ENCODE measurements at regions of chr5 and their contacts with region 1.

Region 1: DNA sequence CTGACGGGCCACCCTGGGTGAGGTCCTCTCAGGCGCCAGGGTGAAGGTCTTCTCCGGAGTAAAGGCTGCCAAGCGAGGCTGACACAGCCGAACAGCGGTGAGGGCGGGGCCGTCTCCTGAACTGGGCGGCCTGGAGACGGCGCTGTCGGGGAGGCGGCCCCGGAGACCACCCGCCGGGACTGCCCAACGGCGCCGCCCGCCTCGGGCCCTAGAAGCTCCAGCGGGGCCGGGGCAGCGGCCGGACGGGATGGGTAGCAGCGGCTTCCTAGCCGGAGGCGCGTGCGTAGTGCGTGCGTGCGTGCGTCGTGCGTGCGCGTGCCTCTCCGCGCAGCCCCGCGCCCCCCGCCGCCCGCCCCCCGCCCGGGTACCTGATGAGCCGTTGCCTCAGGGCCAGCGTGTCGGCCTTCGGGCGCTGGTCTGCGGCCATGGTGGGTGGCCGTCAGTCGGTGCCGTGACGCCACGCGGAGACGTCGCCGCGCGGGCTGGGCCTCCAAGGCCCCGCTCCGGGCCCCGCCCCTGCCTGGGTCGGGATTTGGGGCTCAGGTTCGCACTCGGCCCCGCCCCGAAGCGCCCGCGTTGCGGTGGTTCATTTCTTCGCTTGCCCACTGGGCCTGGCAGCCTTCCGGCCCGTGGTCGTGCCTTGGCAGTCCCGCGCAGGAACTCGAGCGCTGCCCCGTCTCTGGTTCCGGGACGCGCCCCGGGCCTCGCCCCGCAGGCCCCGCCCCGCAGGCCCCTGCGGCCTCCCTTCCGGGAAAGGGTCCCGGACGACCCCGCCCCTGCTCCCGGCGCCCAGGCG is at the start of gene PHYKPL:
- DNase-seq: peak; percentile 72 to 81
- H3K4me3 ChIP-seq: peak within 1 kb of the TSS; percentile 78
- H3K4me3 Mint-ChIP-seq: peak within 1 kb of the TSS; percentile 79
- H3K27ac Mint-ChIP-seq: peak within 1 kb of the TSS; percentile 77
- H3K4me1 ChIP-seq: peaks cover 20% of the 10 kb centered on the region
- H3K4me1 Mint-ChIP-seq: peaks cover 21% of the 10 kb centered on the region
- H3K27me3 ChIP-seq: no peaks in the 10 kb centered on the region
- H3K27me3 Mint-ChIP-seq: no peaks in the 10 kb centered on the region
- CTCF ChIP-seq: peak in 1 of 2 experiments; percentile 15
- total RNA-seq, gene PHYKPL: 78.2 and 82.1 TPM in 2 replicates

Region 2: GRCh38 chr5:178261666-178262606 is 29.6 kb after region 1 on chr5:
- CTCF ChIA-PET with region 1: no interaction called
- POLR2A ChIA-PET with region 1: interaction called, 11 read pairs
- intact Hi-C with region 1: no loop called
- DNase-seq: peak in 1 of 2 experiments; percentile 24
- H3K4me3 ChIP-seq: no peak overlapping the region
- H3K4me3 Mint-ChIP-seq: no peak overlapping the region
- H3K27ac Mint-ChIP-seq: no peak overlapping the region
- H3K4me1 ChIP-seq: peaks cover 8% of the 10 kb centered on the region
- H3K4me1 Mint-ChIP-seq: no peaks in the 10 kb centered on the region
- H3K27me3 ChIP-seq: no peaks in the 10 kb centered on the region; the same call in 1 of the 2 replicates
- H3K27me3 Mint-ChIP-seq: no peaks in the 10 kb centered on the region
- CTCF ChIP-seq: no peak